ENCODE measurements at regions of chr12 and their contacts with region 1.

Region 1: DNA sequence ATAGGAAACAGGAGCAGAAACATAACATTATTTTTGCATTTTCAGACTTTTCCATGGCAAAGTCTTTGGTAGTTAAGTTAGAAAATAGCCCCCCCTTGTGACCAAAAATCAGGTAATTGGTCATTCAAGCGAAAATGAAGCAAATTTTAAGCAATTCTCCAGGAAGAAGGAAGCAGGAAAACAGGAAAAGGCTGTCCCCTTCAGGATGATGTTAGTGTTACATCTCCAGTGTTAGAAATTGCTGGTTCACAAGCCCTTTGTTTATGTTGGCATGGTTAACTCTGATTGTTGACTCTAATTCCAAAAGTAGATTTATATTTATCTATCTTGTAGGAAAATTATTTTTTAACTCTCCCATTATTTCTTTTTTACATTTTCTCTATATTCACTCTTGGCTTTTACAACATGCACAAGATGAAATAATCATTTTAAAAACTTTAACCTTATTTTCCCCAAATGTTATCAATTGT is 18.8 kb upstream of the GAS2L3 start:
- DNase-seq: no peak
- H3K4me3 ChIP-seq: no peak overlapping the region
- H3K27ac ChIP-seq: peak overlapping the region; percentile 43
- H3K4me1 ChIP-seq: peaks cover 7% of the 10 kb centered on the region
- H3K27me3 ChIP-seq: no peaks in the 10 kb centered on the region
- CTCF ChIP-seq: peak; percentile 86

Region 2: DNA sequence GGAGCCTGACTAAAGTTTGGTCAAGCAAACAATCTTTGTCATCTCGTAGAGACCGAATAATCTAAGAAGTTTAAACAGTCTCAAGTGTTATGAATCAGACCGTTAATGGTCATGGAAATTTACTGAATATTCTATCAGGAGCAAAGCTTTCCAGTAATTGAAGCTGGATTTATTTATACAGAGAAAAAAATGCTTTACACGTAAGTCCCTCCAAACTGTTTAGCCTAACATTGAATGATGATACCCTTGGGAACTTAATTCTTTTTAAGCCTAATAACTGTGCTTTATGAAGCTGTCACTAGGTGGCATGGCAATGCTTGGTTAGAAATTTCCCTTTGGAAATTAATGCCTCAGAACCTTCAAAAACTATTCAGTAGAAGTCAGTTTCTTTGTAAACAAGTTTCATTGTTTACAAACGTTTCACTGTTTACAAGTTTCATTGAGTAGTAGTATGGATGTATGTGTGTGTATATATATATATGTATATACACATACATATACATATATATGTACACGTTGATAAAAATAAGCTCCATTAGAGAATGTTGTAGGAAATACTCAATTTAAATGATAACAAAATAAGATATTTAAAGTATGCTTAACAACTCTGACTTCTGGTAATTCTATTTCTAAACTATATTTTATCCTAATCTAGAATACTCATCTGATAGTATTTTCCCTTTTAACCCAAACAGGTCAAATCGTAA is 319.9 kb before region 1 on chr12:
- intact Hi-C with region 1: loop called (anchors 10 kb)
- DNase-seq: no peak
- H3K4me3 ChIP-seq: no peak overlapping the region
- H3K27ac ChIP-seq: peak overlapping the region; percentile 34
- H3K4me1 ChIP-seq: no peaks in the 10 kb centered on the region
- H3K27me3 ChIP-seq: no peaks in the 10 kb centered on the region
- CTCF ChIP-seq: peak; percentile 81

Region 3: DNA sequence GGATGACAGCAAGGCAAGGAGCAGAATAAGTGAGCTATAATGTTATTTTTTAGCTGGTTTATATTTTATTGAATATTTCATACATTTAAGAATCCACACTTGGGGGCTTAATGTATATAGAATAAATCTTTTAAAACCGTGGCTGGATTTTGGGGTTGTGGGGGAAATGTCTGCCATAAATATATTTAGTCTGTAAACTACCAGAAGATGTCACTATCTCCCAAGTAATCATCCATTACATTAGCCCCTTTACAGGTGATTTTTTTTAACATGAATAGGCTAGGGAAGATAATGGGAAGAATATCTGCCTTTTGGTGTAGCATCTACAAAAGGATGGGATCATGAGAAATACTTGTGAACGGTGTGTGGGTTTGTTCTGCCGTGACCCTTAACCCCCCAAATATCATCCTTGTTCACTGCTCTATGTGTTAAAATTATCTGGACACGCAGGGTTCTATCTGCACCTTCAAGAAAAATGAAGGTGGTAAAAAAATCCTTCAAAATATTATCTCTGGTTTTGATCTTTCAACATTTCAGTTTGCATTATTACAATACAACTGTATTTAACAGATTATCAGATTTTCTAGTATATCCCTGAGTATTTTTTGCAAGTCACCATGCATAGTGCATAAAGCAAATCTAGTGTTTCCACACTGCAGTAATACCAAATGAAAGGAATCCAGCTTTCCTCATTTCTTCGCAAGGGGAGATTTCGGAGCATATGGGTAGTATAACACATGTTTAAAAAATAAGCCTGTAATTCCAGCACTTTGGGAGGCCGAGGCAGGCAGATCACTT is 205.8 kb before region 1 on chr12:
- intact Hi-C with region 1: loop called (anchors 5 kb)
- DNase-seq: no peak
- H3K4me3 ChIP-seq: no peak overlapping the region
- H3K27ac ChIP-seq: no peak overlapping the region
- H3K4me1 ChIP-seq: no peaks in the 10 kb centered on the region
- H3K27me3 ChIP-seq: no peaks in the 10 kb centered on the region
- CTCF ChIP-seq: peak; percentile 54

Region 4: GRCh38 chr12:100450735-100451134 is 103.9 kb before region 1 on chr12:
- intact Hi-C with region 1: no loop called
- DNase-seq: no peak
- H3K4me3 ChIP-seq: no peak overlapping the region
- H3K27ac ChIP-seq: no peak overlapping the region
- H3K4me1 ChIP-seq: no peaks in the 10 kb centered on the region
- H3K27me3 ChIP-seq: peaks cover 29% of the 10 kb centered on the region
- CTCF ChIP-seq: no peak

Measured in left ventricle myocardium inferior (tissue), 1 donor.